ENCODE measurements at regions of chr4 and their contacts with region 1.

Region 1: DNA sequence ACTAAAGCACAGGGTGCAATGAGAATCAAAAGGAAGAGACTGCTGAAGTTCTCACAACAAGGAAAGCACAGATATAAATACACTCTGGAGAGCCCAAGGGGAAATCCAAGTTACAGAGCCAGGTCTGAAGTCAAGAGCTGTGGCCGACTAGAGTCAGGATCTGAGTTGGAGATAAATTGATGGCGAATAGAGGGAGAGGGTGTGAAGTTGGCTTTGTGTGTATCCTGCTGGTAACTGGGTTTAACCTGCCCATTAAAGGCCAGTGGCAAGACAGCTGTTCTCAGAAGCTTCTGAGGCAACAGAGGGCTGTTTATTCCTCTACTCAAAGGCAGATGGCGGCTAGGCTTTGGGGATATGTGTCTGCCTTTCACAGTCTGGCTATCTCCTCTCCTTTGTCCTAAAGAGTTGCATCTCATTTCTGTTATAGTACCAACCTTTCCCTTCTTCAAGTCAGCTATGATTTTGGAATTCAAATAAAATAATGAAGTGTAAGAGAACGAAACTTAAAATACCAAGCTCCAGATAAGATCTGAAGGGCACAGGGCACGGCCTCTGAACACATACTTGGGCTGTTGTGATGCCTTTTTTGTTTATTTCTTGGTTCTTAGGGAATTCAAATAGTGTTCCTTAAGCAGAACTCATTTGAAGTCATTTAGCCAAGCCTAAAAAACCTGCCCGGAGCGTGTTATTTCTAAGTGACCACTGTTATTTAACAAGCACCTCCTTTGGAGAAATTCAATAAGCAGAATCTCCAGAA is 142.1 kb downstream of the APBB2 start:
- DNase-seq: peak; percentile 52
- ATAC-seq: peak; percentile 72
- H3K4me3 ChIP-seq: no peak overlapping the region
- H3K27ac ChIP-seq: peak overlapping the region; percentile 72
- H3K4me1 ChIP-seq: peaks cover 12% of the 10 kb centered on the region
- H3K27me3 ChIP-seq: no peaks in the 10 kb centered on the region
- CTCF ChIP-seq: no peak
- EP300 ChIP-seq: no peak
- POLR2A ChIP-seq: no peak
- RAD21 ChIP-seq: no peak

Region 2: DNA sequence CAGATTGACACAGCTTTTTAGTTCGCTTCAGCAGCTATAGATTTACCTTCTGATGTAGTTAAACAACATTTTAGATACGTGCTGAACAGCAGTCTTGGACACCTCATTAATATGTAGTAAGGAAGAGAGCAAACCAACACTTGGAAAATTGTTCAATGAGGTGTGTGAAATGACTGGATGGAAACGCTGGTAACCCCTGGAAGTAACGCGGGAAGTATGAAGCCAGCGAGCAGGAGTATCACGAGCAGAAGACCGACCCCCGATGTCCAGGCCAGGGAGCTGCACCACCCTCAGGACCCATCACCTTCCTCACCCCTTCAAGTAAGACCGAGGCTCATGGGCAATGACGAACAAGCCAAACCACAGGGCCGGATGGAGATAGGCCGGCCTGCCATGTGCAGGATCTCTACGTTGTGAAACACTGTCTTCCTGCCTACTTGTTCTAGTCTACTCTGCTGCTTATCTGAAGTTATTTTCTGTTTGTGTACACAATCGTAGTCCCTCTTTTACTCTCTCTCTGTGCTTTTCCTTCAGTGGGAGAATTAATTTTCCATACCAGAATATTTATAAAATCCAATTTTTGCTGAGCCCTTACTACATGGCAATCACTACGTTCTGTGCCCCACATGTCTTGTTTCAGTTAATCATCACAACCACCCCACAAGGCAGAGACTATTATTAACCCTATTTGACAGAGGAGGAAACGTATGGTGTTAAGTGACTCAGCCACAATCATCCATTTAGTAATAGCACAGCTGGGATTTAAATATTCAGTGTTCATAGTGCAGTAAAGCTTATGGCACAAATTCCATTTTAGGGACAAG is 79.5 kb before region 1 on chr4:
- CTCF ChIA-PET with region 1: no interaction called
- POLR2A ChIA-PET with region 1: interaction called, 3 read pairs
- RAD21 ChIA-PET with region 1: interaction called, 10 read pairs
- SMC1A ChIA-PET with region 1: interaction called, 4 read pairs
- in situ Hi-C with region 1: no loop called
- intact Hi-C with region 1: no loop called
- DNase-seq: peak; percentile 78
- ATAC-seq: peak; percentile 85
- H3K4me3 ChIP-seq: peak overlapping the region; percentile 8
- H3K27ac ChIP-seq: peak overlapping the region; percentile 98
- H3K4me1 ChIP-seq: peaks cover 38% of the 10 kb centered on the region
- H3K27me3 ChIP-seq: no peaks in the 10 kb centered on the region
- CTCF ChIP-seq: no peak
- EP300 ChIP-seq: peak in 1 of 2 experiments; percentile 39; a peak in 1 of 4 replicates
- POLR2A ChIP-seq: peak; percentile 71
- RAD21 ChIP-seq: no peak

Region 3: DNA sequence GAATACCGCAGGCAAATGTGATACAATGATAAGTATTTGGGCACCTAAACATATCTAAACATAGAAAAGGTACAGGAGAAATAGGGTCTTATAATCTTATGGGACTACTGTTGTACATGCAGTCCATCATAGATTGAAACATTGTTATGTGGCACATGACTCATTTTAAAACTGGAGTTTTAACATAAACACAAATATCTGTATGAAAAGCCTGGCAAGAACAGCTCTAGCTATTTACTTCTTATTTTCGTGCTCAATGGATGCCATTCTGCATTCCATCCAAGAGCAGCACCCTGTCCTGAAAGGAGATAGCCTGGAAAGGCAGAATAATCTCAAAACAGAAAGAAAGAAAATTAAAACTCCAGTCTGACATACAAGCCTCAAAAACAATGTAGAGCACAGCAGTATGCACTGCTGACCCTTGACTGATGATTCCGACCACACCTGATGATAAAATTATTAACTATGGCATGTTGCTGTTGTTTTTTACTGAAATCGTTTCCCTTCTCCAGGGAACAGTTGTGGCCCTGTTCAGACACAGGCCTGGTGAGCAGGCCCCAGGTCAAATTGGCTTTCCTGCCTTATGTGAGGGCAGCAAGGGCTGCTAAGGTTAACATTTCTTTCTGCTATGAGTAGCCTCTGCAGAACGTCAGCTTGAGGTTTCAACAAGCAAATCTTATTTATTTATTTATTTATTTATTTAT is 10.6 kb before region 1 on chr4:
- CTCF ChIA-PET with region 1: interaction called, 6 read pairs
- POLR2A ChIA-PET with region 1: interaction called, 8 read pairs
- RAD21 ChIA-PET with region 1: interaction called, 6 read pairs
- SMC1A ChIA-PET with region 1: interaction called, 11 read pairs
- in situ Hi-C with region 1: no loop called
- intact Hi-C with region 1: no loop called
- DNase-seq: no peak
- ATAC-seq: no peak
- H3K4me3 ChIP-seq: no peak overlapping the region
- H3K27ac ChIP-seq: no peak overlapping the region
- H3K4me1 ChIP-seq: no peaks in the 10 kb centered on the region; the same call in 1 of the 2 replicates
- H3K27me3 ChIP-seq: no peaks in the 10 kb centered on the region
- CTCF ChIP-seq: no peak
- EP300 ChIP-seq: no peak
- POLR2A ChIP-seq: no peak
- RAD21 ChIP-seq: no peak